Body of pancreas (tissue), 4 donors: ENCODE measurements at regions of chr12 and their contacts with region 1.

Region 1: GRCh38 chr12:111396726-111397445 is 8.8 kb upstream of the SH2B3 start:
- DNase-seq: peak; percentile 83 to 89 (median 88)
- ATAC-seq: peak; percentile 92
- H3K4me3 ChIP-seq: no peak overlapping the region
- H3K27ac ChIP-seq: peak overlapping the region in 3 of 4 donors; percentile 1 to 62 (median 16)
- H3K4me1 ChIP-seq: peaks cover 14% of the 10 kb centered on the region
- H3K27me3 ChIP-seq: no peaks in the 10 kb centered on the region
- CTCF ChIP-seq: peak; percentile 97 to 99 (median 98)
- POLR2A ChIP-seq: no peak

Region 2: DNA sequence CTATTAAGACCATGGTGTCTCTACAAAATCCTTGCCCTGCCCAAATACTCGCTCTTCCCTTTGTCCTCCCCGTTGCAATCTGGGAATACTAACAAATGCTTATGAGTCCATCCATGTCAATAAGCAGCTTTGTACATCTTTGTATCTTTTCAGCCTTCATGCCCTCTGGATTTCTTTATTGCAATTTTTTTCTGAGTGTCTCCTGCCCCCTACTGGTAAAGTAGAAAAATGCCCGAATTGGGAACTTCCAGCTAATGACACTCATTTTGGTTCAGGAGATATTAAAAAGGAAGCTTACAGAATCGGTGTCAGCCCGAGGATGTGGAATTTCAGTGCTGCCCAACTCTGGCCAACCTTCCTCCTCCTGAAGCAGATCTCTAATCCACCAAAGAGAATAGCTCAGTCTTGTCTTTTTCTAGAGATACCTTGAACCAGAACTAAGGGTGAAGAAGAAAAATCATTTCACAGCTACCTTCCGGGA is 54.8 kb after region 1 on chr12:
- intact Hi-C with region 1: loop called (anchors 5 kb)
- DNase-seq: peak in 1 of 4 donors; percentile 8
- ATAC-seq: peak; percentile 41
- H3K4me3 ChIP-seq: no peak overlapping the region
- H3K27ac ChIP-seq: no peak overlapping the region
- H3K4me1 ChIP-seq: peaks cover 17% of the 10 kb centered on the region
- H3K27me3 ChIP-seq: no peaks in the 10 kb centered on the region
- CTCF ChIP-seq: peak; percentile 58 to 87 (median 80)
- POLR2A ChIP-seq: no peak